ENCODE measurements at regions of chr2 and their contacts with region 1.

Region 1: DNA sequence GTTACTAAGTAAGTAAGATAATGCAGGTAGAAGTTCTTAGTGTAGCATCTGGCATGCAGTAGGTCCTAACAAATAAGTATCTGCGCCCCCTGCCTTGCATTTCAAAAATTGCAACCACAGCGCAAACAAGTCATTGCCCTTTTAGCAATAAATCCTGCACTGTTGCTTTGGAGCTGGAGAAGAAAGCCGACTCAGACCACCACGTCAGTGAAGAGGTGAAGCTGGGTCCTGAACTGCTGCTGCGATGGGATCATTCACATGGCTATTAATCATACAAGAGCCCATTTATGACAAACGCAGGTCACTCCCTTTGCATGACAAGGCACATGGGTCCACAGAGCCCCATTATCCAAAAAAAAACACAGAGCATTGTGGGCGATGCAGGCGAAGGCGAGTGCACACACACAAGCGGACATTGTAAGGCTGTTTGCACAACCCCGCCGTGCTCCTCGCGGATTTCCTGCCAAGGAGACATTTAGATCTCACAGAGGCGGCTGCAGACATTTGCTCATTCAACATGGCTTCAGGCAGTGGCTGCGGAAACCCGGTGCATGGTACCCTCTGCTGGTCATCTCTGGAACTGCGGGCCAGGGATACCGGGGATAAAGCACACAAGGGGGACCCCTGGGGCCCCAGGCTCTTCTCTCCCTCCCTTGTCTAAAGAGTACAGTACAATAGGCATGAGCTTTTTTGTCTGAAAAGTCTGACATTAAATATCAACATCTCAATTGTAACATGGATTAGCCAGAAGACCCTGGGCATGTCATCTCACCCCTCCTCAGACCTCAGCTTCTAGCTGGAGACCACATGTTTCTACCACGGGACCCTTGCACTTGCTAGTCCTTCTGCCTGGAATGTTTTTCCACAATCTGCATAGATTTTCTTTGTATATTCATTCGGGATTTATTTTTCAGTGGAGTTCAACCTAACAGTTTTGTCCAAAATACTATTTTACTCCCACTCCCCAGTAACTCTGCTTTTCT is 56.7 kb downstream of the CYRIA start:
- DNase-seq: peak; percentile 92
- H3K4me3 Mint-ChIP-seq: peak overlapping the region; percentile 79
- H3K27ac Mint-ChIP-seq: peak overlapping the region; percentile 85
- H3K4me1 Mint-ChIP-seq: peaks cover 9% of the 10 kb centered on the region
- H3K27me3 Mint-ChIP-seq: peaks cover 7% of the 10 kb centered on the region

Region 2: DNA sequence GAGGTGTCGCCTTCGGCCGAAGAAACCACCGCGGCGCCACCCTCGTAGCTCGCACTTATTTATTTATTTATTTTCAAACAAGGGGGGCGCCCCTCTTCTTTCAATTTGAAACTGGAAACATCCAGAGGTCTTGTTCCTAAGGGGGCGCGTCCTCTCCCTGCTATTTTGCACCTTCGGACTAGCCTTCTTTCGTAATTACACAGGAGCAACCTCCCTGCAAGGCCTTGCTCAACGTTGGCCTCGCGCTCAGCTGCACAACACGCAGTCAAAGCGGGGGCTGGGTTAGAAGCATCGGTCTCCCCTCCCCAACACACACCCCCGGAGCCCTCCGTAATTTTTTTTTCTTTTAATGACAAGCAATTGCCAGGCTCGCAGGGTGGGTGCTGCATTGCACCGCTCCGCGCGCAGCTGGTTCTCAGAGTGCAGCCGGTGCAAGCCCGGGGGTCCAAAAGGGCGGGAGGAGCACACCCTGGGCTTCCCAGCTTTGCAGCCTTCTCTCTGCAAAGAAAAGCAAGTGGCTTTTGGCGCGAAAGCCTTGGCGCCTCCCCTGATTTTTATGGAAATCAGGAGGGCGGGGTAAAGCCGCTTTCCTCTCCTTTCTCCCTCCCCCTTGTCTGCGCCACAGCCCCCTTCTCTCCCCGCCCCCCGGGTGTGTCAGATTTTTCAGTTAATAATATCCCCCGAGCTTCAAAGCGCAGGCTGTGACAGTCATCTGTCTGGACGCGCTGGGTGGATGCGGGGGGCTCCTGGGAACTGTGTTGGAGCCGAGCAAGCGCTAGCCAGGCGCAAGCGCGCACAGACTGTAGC is 668.9 kb before region 1 on chr2 and contains the start of gene MYCN:
- CTCF ChIA-PET with region 1: interaction called, 21 read pairs
- DNase-seq: peak; percentile 44
- H3K4me3 Mint-ChIP-seq: peak within 1 kb of the TSS; percentile 59
- H3K27ac Mint-ChIP-seq: peak within 1 kb of the TSS; percentile 33
- H3K4me1 Mint-ChIP-seq: peaks cover 29% of the 10 kb centered on the region
- H3K27me3 Mint-ChIP-seq: peaks cover 79% of the 10 kb centered on the region

Region 3: GRCh38 chr2:16525265-16525887 is 83.6 kb before region 1 on chr2:
- CTCF ChIA-PET with region 1: interaction called, 20 read pairs
- DNase-seq: peak; percentile 43
- H3K4me3 Mint-ChIP-seq: no peak overlapping the region
- H3K27ac Mint-ChIP-seq: no peak overlapping the region
- H3K4me1 Mint-ChIP-seq: no peaks in the 10 kb centered on the region
- H3K27me3 Mint-ChIP-seq: no peaks in the 10 kb centered on the region

Region 4: DNA sequence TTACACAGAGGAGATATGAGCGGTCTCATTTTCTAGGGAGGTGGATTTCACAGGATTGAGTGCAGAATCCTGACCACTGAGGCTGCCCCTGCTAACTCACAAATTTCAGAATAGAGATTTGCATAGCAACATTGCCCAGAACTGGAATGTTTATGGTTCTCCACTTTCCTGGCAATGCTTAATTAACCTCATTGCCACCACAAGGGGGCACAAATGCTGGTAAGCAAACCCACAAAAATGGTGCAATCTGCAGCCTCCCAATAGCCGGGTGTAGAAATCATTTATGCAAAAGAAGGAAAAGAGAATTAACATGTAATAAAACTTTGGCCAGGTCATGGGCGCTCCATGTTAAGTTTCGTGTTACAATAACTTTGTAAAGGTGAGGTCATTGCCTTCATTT is 55.7 kb before region 1 on chr2:
- CTCF ChIA-PET with region 1: interaction called, 13 read pairs
- DNase-seq: peak; percentile 38
- H3K4me3 Mint-ChIP-seq: no peak overlapping the region
- H3K27ac Mint-ChIP-seq: no peak overlapping the region
- H3K4me1 Mint-ChIP-seq: no peaks in the 10 kb centered on the region
- H3K27me3 Mint-ChIP-seq: no peaks in the 10 kb centered on the region

Region 5: DNA sequence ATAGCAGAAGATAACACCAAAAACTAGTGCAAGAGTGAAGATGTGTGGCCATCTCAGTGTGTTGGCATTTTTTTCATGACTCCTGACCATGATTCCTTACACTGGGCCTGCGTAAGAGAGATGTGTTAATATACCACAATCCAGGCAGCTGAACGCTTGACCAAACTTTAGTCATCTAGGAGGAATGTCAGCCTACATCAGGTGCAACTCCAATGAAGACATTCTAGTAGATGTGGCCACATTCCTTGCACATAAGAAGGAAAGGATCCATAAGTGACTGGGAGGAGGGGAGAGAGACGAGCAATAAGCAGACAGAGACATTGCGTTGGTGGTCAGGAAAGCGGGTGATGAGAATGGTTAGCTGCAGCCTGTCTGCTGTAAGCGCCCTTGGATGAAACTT is 14.1 kb after region 1 on chr2:
- CTCF ChIA-PET with region 1: interaction called, 18 read pairs
- DNase-seq: no peak
- H3K4me3 Mint-ChIP-seq: no peak overlapping the region
- H3K27ac Mint-ChIP-seq: peak overlapping the region; percentile 57
- H3K4me1 Mint-ChIP-seq: peaks cover 57% of the 10 kb centered on the region
- H3K27me3 Mint-ChIP-seq: peaks cover 5% of the 10 kb centered on the region

Region 6: GRCh38 chr2:16628314-16628713 is 19.4 kb after region 1 on chr2:
- CTCF ChIA-PET with region 1: interaction called, 18 read pairs
- DNase-seq: no peak
- H3K4me3 Mint-ChIP-seq: no peak overlapping the region
- H3K27ac Mint-ChIP-seq: no peak overlapping the region
- H3K4me1 Mint-ChIP-seq: peaks cover 49% of the 10 kb centered on the region
- H3K27me3 Mint-ChIP-seq: peaks cover 12% of the 10 kb centered on the region

Region 7: GRCh38 chr2:16756831-16757644 is 148.1 kb after region 1 on chr2:
- CTCF ChIA-PET with region 1: interaction called, 109 read pairs
- DNase-seq: peak; percentile 75
- H3K4me3 Mint-ChIP-seq: no peak overlapping the region
- H3K27ac Mint-ChIP-seq: no peak overlapping the region
- H3K4me1 Mint-ChIP-seq: no peaks in the 10 kb centered on the region
- H3K27me3 Mint-ChIP-seq: peaks cover 4% of the 10 kb centered on the region